ENCODE measurements at regions of chr1 and their contacts with region 1.

Region 1: GRCh38 chr1:197210426-197210825 is 57.6 kb upstream of the CRB1 start:
- DNase-seq: no peak
- H3K4me3 ChIP-seq: no peak overlapping the region
- H3K27ac ChIP-seq: no peak overlapping the region
- H3K4me1 ChIP-seq: no peaks in the 10 kb centered on the region
- H3K27me3 ChIP-seq: no peaks in the 10 kb centered on the region
- CTCF ChIP-seq: no peak
- POLR2A ChIP-seq: no peak

Region 2: DNA sequence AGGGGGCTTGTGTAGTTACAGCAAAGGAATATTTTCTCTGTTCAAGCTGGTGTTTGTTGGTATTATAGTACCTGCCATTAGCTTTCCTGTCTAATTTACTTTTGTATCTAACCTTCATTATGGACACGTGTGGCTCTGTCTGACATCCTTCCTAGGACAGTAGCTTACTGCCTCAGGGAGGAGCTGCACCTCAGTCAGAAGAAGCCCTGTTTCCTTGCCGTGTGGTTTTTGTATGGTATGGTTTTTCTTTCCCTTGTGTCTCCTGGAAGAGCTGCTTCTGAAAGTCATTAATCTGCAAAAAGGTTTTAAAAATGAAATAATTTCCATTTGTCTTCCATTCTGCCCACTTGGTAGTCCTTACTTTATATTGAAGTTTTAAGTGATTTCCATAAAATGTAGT is 40.2 kb after region 1 on chr1:
- CTCF ChIA-PET with region 1: no interaction called
- POLR2A ChIA-PET with region 1: no interaction called
- dilution Hi-C with region 1: no loop called
- intact Hi-C with region 1: loop called (anchors 2 kb)
- DNase-seq: no peak
- H3K4me3 ChIP-seq: no peak overlapping the region
- H3K27ac ChIP-seq: no peak overlapping the region
- H3K4me1 ChIP-seq: no peaks in the 10 kb centered on the region
- H3K27me3 ChIP-seq: peaks cover 0 to 1% of the 10 kb centered on the region in 2 experiments
- CTCF ChIP-seq: no peak
- POLR2A ChIP-seq: no peak

Region 3: GRCh38 chr1:197302775-197303174 is 92.3 kb after region 1 on chr1:
- CTCF ChIA-PET with region 1: no interaction called
- POLR2A ChIA-PET with region 1: no interaction called
- dilution Hi-C with region 1: no loop called
- intact Hi-C with region 1: no loop called
- DNase-seq: no peak
- H3K4me3 ChIP-seq: no peak overlapping the region
- H3K27ac ChIP-seq: no peak overlapping the region
- H3K4me1 ChIP-seq: no peaks in the 10 kb centered on the region
- H3K27me3 ChIP-seq: no peaks in the 10 kb centered on the region
- CTCF ChIP-seq: no peak
- POLR2A ChIP-seq: no peak